Activated B cell treated with CpG ODN at 0.5 μM for 24 hours (primary cell): ENCODE measurements at regions of chr16 and their contacts with region 1.

Region 1: DNA sequence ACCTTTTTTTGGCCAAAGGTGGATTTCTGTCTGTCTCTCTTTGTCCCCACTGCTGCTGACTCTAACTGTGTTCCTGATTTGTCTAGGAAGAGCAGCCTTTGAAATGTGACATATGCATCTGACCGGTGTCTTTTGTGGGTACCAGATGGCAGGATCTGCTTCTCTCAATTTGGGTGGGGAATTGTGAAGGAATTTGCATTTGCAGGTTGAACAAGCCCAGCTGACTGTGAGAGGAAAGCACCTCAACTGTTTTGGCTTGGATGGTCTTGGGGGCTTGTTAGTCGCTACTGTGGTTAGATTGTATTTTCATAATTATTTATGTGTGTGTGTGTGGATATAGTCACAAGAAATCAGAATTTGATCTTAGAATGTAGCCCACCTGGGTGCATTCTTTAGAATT is 37.7 kb upstream of the LCMT1 start:
- DNase-seq: no peak
- ATAC-seq: peak; percentile 80
- H3K4me3 Mint-ChIP-seq: peak overlapping the region; percentile 29
- H3K27ac Mint-ChIP-seq: peak overlapping the region; percentile 79
- H3K4me1 Mint-ChIP-seq: peaks cover 31% of the 10 kb centered on the region
- H3K27me3 Mint-ChIP-seq: no peaks in the 10 kb centered on the region
- CTCF ChIP-seq: no peak

Region 2: GRCh38 chr16:25093208-25094061 is 19.6 kb after region 1 on chr16:
- CTCF ChIA-PET with region 1: no interaction called
- POLR2A ChIA-PET with region 1: interaction called, 3 read pairs
- intact Hi-C with region 1: loop called (anchors 2 kb)
- DNase-seq: no peak
- ATAC-seq: peak; percentile 21
- H3K4me3 Mint-ChIP-seq: peak overlapping the region; percentile 53
- H3K27ac Mint-ChIP-seq: peak overlapping the region; percentile 80
- H3K4me1 Mint-ChIP-seq: peaks cover 21% of the 10 kb centered on the region
- H3K27me3 Mint-ChIP-seq: no peaks in the 10 kb centered on the region
- CTCF ChIP-seq: no peak